Ovary (tissue), 10 donors: ENCODE measurements at regions of chr1 and their contacts with region 1.

Region 1: GRCh38 chr1:35451125-35451528 is 106.1 kb downstream of the KIAA0319L start:
- DNase-seq: peak; percentile 55 to 86 (median 79)
- H3K4me3 ChIP-seq: no peak overlapping the region
- H3K27ac ChIP-seq: no peak overlapping the region
- H3K4me1 ChIP-seq: peaks cover 2% of the 10 kb centered on the region
- H3K27me3 ChIP-seq: no peaks in the 10 kb centered on the region
- CTCF ChIP-seq: peak; percentile 55 to 70 (median 69)
- EP300 ChIP-seq: no peak
- POLR2A ChIP-seq: no peak

Region 2: GRCh38 chr1:35157904-35158303 is 293.2 kb before region 1 on chr1:
- intact Hi-C with region 1: no loop called
- DNase-seq: no peak
- H3K4me3 ChIP-seq: no peak overlapping the region
- H3K27ac ChIP-seq: no peak overlapping the region
- H3K4me1 ChIP-seq: no peaks in the 10 kb centered on the region
- H3K27me3 ChIP-seq: no peaks in the 10 kb centered on the region
- CTCF ChIP-seq: no peak
- EP300 ChIP-seq: no peak
- POLR2A ChIP-seq: no peak

Region 3: DNA sequence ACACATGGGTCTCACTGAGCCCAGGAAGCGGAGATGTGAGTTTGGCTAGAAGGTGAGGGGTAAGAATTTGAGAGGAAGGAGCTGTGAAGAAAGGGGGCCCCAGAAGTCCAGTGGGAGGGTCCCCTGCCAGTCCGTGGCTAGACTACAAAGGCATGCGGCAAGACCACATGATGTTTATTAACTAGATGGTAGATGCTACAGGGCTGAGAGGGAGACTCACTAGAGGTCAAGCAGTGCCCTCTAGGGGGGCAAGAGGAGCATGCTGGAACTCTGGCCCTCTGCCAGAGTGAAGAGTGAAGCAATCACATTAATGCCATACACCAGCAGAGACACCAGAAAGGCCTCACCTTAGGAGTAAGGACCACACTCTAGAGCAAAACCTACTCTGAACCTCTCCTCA is 93.9 kb after region 1 on chr1:
- intact Hi-C with region 1: no loop called
- DNase-seq: no peak
- H3K4me3 ChIP-seq: no peak overlapping the region
- H3K27ac ChIP-seq: no peak overlapping the region
- H3K4me1 ChIP-seq: peaks cover 8% of the 10 kb centered on the region
- H3K27me3 ChIP-seq: no peaks in the 10 kb centered on the region
- CTCF ChIP-seq: no peak
- EP300 ChIP-seq: no peak
- POLR2A ChIP-seq: no peak

Region 4: GRCh38 chr1:35564037-35564883 is 113.1 kb after region 1 on chr1:
- intact Hi-C with region 1: loop called (anchors 2 to 5 kb)
- DNase-seq: peak; percentile 72 to 85 (median 82)
- H3K4me3 ChIP-seq: no peak overlapping the region
- H3K27ac ChIP-seq: no peak overlapping the region
- H3K4me1 ChIP-seq: peaks cover 4% of the 10 kb centered on the region
- H3K27me3 ChIP-seq: no peaks in the 10 kb centered on the region
- CTCF ChIP-seq: peak; percentile 30 to 63 (median 58)
- EP300 ChIP-seq: no peak
- POLR2A ChIP-seq: no peak

Region 5: DNA sequence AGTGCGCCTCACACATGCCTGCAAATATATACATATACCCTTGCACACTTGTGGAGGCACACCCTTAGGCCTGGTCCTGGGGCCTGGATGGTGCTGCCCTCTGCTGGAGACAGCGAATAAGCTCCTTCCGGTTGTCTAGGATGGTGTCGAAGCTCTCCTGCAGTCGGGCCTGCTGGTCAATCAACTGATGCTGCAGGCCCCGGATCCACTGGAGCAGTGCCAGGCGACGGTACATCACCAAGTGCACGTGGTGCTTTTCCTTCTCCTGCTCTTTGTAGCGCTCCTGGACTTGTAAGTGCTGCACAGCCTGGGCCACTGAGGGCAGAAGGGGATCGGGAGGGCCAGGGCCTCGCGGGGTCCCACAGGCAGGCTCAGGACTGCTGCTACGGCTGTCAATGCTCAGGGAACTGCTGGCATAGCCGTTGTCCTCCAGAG is 264.5 kb after region 1 on chr1:
- intact Hi-C with region 1: loop called in 2 of 4 experiments (anchors 5 to 10 kb)
- DNase-seq: peak; percentile 50 to 74 (median 68)
- H3K4me3 ChIP-seq: no peak overlapping the region
- H3K27ac ChIP-seq: no peak overlapping the region
- H3K4me1 ChIP-seq: peaks cover 4% of the 10 kb centered on the region
- H3K27me3 ChIP-seq: no peaks in the 10 kb centered on the region
- CTCF ChIP-seq: peak; percentile 39 to 61 (median 46)
- EP300 ChIP-seq: no peak
- POLR2A ChIP-seq: no peak

Region 6: GRCh38 chr1:35726450-35727433 is 275.6 kb after region 1 on chr1:
- intact Hi-C with region 1: loop called in 1 of 4 experiments (anchors 10 kb)
- DNase-seq: peak; percentile 40 to 63 (median 56)
- H3K4me3 ChIP-seq: no peak overlapping the region
- H3K27ac ChIP-seq: no peak overlapping the region
- H3K4me1 ChIP-seq: no peaks in the 10 kb centered on the region
- H3K27me3 ChIP-seq: no peaks in the 10 kb centered on the region
- CTCF ChIP-seq: peak; percentile 55 to 58 (median 58)
- EP300 ChIP-seq: no peak
- POLR2A ChIP-seq: no peak